B cell (primary cell): ENCODE measurements at regions of chr5 and their contacts with region 1.

Region 1: GRCh38 chr5:147782110-147783028 is at the start of gene JAKMIP2:
- DNase-seq: peak; percentile 67
- ATAC-seq: peak; percentile 99
- H3K4me3 ChIP-seq: peak within 1 kb of the TSS; percentile 23 to 50 (median 32)
- H3K4me3 Mint-ChIP-seq: peak within 1 kb of the TSS; percentile 77
- H3K27ac ChIP-seq: peak within 1 kb of the TSS in 1 of 2 donors; percentile 60
- H3K27ac Mint-ChIP-seq: peak within 1 kb of the TSS; percentile 57
- H3K4me1 ChIP-seq: peaks cover 6 to 7% of the 10 kb centered on the region in 2 donors
- H3K4me1 Mint-ChIP-seq: peaks cover 13% of the 10 kb centered on the region
- H3K27me3 ChIP-seq: no peaks in the 10 kb centered on the region
- H3K27me3 Mint-ChIP-seq: peaks cover 4% of the 10 kb centered on the region
- CTCF ChIP-seq: no peak
- total RNA-seq, gene JAKMIP2: 2.4 and 4.1 TPM in 2 replicates

Region 2: DNA sequence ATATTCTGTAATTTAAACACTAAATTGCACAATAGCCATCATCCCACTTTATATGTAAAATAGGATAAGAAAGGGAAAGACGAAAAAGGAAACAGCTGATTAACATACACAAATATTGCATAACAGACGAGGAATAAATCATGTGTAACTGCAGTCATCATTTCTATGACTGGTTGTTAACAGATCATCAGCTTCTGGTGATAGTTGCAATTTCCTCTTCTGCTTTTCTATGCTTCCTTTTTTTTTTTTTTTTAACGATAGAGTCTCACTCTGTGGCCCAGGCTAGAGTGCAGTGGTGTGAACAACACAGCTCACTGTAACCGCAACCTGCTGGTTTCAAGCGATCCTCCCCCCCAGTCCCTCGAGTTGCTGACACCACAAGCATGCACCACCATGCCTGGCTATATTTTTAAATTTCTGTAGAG is 22.7 kb after region 1 on chr5:
- CTCF ChIA-PET with region 1: interaction called, 10 read pairs
- POLR2A ChIA-PET with region 1: interaction called, 4 read pairs
- intact Hi-C with region 1: loop called (anchors 1 kb)
- DNase-seq: peak; percentile 71
- ATAC-seq: peak; percentile 95
- H3K4me3 ChIP-seq: no peak overlapping the region
- H3K4me3 Mint-ChIP-seq: peak overlapping the region; percentile 35
- H3K27ac ChIP-seq: peak overlapping the region; percentile 11 to 17
- H3K27ac Mint-ChIP-seq: peak overlapping the region; percentile 57
- H3K4me1 ChIP-seq: peaks cover 22 to 24% of the 10 kb centered on the region in 2 donors
- H3K4me1 Mint-ChIP-seq: peaks cover 20% of the 10 kb centered on the region
- H3K27me3 ChIP-seq: peaks cover 0 to 17% (median 9%) of the 10 kb centered on the region in 4 experiments
- H3K27me3 Mint-ChIP-seq: peaks cover 22% of the 10 kb centered on the region
- CTCF ChIP-seq: no peak

Region 3: GRCh38 chr5:148383564-148384379 is 601.4 kb after region 1 on chr5 and contains the start of gene FBXO38:
- CTCF ChIA-PET with region 1: no interaction called
- POLR2A ChIA-PET with region 1: no interaction called
- intact Hi-C with region 1: loop called (anchors 5 kb)
- DNase-seq: peak; percentile 99
- ATAC-seq: peak; percentile 98
- H3K4me3 ChIP-seq: peak within 1 kb of the TSS; percentile 69 to 94 (median 87)
- H3K4me3 Mint-ChIP-seq: peak within 1 kb of the TSS; percentile 88
- H3K27ac ChIP-seq: peak within 1 kb of the TSS; percentile 92 to 96
- H3K27ac Mint-ChIP-seq: peak within 1 kb of the TSS; percentile 92
- H3K4me1 ChIP-seq: peaks cover 24 to 26% of the 10 kb centered on the region in 2 donors
- H3K4me1 Mint-ChIP-seq: peaks cover 51% of the 10 kb centered on the region
- H3K27me3 ChIP-seq: no peaks in the 10 kb centered on the region
- H3K27me3 Mint-ChIP-seq: no peaks in the 10 kb centered on the region
- CTCF ChIP-seq: peak; percentile 24
- total RNA-seq, gene FBXO38: 97.0 and 124 TPM in 2 replicates